Breast epithelium (tissue), 4 donors: ENCODE measurements at regions of chr1 and their contacts with region 1.

Region 1: DNA sequence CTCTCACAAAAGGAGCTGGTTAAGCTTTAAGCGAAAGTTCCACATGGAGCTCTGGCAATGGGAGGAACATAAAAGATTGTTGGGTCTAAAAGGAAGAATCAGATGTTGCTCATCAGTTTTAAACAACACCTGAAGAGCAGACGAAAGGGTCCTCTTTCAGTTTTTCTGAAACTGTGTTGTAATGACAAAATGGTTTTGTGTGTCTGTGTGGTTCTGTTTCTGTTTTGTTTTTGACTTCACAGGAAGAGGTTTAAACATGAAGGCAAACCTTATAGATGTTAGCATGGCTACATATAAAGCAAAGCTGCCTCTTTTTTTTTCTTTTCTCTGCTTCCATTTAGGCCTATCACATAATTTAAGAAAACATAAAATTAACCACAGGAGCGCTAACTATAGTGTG is 136.1 kb downstream of the ZP4 start:
- DNase-seq: no peak
- H3K4me3 ChIP-seq: no peak overlapping the region
- H3K27ac ChIP-seq: no peak overlapping the region
- H3K4me1 ChIP-seq: no peaks in the 10 kb centered on the region
- H3K27me3 ChIP-seq: no peaks in the 10 kb centered on the region
- CTCF ChIP-seq: no peak
- POLR2A ChIP-seq: no peak

Region 2: DNA sequence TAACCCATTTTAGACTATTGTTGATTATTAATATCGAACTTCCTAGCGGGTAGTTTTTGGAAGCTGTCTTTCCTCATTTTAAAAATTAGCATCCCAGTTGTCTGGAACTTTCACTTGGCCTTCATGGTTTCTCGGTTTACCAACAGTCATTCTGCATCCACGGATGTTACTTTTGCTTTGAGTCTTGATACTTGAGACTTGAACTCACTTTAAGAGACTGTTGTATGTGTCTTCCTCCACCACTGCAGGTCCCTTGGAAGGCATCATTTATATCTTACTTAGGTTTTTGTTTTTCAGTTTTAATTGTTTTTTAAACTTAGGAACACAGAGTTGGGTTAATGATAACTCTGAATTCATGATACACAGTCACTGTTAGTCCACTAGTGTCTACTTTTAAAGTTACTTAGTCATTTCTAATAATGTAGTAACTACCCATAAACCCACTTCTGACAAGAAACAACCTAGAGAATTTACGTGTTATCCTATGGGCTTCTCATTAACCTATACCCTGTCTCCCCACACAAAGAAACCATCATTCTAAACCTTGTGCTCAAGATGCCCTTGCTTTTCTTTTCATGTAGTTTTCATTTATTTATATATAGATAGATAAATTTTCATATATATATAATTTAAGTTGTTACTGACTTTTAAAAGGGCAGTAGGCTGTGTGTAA is 16.6 kb before region 1 on chr1:
- intact Hi-C with region 1: loop called (anchors 2 kb)
- DNase-seq: no peak
- H3K4me3 ChIP-seq: no peak overlapping the region
- H3K27ac ChIP-seq: no peak overlapping the region
- H3K4me1 ChIP-seq: no peaks in the 10 kb centered on the region
- H3K27me3 ChIP-seq: no peaks in the 10 kb centered on the region
- CTCF ChIP-seq: no peak
- POLR2A ChIP-seq: no peak

Region 3: DNA sequence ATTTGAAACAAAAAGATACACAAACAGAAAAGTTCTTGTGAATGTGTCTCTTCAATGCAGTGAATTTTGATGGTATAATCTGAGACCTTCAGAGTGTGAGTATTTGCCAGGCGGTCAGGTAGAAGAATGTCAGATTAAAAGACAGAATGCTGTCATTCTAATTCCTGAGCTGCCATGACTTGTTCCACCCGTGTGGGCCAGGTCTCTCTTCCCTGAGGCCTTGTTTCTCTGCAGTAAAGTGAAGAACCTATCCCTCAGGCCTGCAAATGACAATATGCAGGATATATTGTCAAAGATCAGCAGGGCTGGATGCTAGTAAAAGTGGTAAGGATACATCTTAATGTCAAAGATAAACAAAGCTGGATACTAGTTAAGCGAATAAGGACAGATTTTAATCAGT is 24.7 kb after region 1 on chr1:
- intact Hi-C with region 1: no loop called
- DNase-seq: no peak
- H3K4me3 ChIP-seq: no peak overlapping the region
- H3K27ac ChIP-seq: no peak overlapping the region
- H3K4me1 ChIP-seq: no peaks in the 10 kb centered on the region
- H3K27me3 ChIP-seq: no peaks in the 10 kb centered on the region
- CTCF ChIP-seq: no peak
- POLR2A ChIP-seq: no peak